CD4-positive, alpha-beta memory T cell (primary cell): ENCODE measurements at regions of chr11 and their contacts with region 1.

Region 1: DNA sequence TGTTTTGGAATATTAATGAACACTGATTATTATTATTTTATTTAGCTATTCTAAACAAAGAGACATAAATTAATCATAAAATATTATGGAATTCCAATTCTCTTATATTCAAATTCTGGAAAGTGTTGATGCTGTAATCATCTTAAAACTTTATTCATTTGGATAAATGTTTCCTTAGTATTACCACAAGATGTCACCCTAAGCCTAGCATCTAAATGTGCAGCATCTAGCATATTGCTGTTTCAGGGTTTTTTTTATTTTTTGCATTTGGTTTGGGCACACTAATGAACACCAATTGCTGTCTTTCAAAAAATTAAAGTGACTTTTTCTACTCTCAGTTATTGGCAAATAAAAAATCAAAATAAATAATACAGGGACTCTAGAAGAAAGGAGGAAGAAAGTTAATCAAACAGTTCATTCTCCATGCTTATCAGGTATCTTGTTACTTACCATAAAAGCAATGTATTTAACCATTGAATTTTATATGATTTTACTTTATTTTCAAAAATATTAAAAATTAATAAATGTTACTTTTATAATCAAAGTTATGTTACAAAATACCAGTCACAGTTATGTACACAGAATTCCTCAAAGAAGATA is 31.8 kb downstream of the DLG2 start:
- DNase-seq: peak in 4 of 5 donors; percentile 41 to 63 (median 54)
- H3K4me3 ChIP-seq: no peak overlapping the region
- H3K4me3 Mint-ChIP-seq: no peak overlapping the region
- H3K27ac ChIP-seq: no peak overlapping the region
- H3K27ac Mint-ChIP-seq: no peak overlapping the region
- H3K4me1 ChIP-seq: no peaks in the 10 kb centered on the region
- H3K4me1 Mint-ChIP-seq: no peaks in the 10 kb centered on the region
- H3K27me3 ChIP-seq: no peaks in the 10 kb centered on the region
- H3K27me3 Mint-ChIP-seq: peaks cover 0 to 3% of the 10 kb centered on the region in 2 donors

Region 2: DNA sequence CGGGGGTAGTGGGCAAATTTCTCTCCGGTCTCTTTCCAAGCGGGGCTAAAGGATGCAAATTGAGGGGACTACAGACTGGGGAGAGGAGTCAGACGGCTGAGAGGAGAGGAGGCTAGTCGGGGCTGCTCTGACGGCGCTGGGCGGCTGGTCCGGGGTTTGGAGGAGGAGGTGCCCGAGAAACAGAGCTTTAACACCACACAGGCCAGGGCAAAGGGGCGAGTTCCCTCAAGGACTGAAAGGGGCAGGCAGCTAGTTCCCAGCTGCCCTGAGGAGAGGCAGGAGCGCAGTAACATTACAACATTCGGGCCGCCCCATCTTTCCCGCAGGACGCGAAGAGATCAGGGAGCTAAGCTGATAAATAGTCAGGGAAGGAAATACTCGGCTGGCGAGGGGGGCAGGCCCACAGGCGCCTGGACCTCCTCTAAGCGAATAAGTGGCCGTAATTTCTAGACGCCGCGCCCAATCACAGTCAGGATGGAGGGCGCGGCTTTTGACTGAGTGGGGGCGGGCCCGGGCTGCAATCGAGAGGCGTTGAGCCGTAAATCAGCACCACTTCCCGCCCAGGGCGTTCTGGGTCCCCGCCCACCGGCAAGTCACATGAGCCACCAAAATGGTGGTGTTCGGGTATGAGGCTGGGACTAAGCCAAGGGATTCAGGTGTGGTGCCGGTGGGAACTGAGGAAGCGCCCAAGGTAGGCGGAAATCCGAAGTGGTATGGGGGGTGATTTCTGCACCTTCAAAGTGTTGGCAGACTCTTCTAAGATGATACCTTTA is 32.8 kb after region 1 on chr11 and contains the start of gene TMEM126B:
- CTCF ChIA-PET with region 1: no interaction called
- POLR2A ChIA-PET with region 1: no interaction called
- intact Hi-C with region 1: loop called (anchors 1 kb)
- DNase-seq: peak; percentile 92 to 97 (median 94)
- H3K4me3 ChIP-seq: peak within 1 kb of the TSS; percentile 58 to 73
- H3K4me3 Mint-ChIP-seq: peak within 1 kb of the TSS; percentile 93 to 99 (median 98)
- H3K27ac ChIP-seq: peak within 1 kb of the TSS; percentile 82
- H3K27ac Mint-ChIP-seq: peak within 1 kb of the TSS; percentile 91 to 99 (median 97)
- H3K4me1 ChIP-seq: peaks cover 30% of the 10 kb centered on the region
- H3K4me1 Mint-ChIP-seq: peaks cover 27 to 47% (median 36%) of the 10 kb centered on the region in 4 donors
- H3K27me3 ChIP-seq: no peaks in the 10 kb centered on the region
- H3K27me3 Mint-ChIP-seq: peaks cover 0 to 2% of the 10 kb centered on the region in 2 donors
- total RNA-seq, gene TMEM126B: 40.9 to 46.8 TPM

Region 3: GRCh38 chr11:85826116-85826855 is 230.9 kb after region 1 on chr11:
- CTCF ChIA-PET with region 1: interaction called, 3 read pairs
- POLR2A ChIA-PET with region 1: no interaction called
- intact Hi-C with region 1: loop called (anchors 1 kb)
- DNase-seq: peak in 2 of 5 donors; percentile 18 to 29
- H3K4me3 ChIP-seq: no peak overlapping the region
- H3K4me3 Mint-ChIP-seq: peak overlapping the region in 7 of 8 donors; percentile 4 to 76 (median 18)
- H3K27ac ChIP-seq: peak overlapping the region; percentile 6
- H3K27ac Mint-ChIP-seq: peak overlapping the region; percentile 82 to 99 (median 97)
- H3K4me1 ChIP-seq: peaks cover 74% of the 10 kb centered on the region
- H3K4me1 Mint-ChIP-seq: peaks cover 58 to 77% (median 63%) of the 10 kb centered on the region in 4 donors
- H3K27me3 ChIP-seq: no peaks in the 10 kb centered on the region
- H3K27me3 Mint-ChIP-seq: no peaks in the 10 kb centered on the region

Region 4: GRCh38 chr11:86041975-86042378 is 446.6 kb after region 1 on chr11:
- CTCF ChIA-PET with region 1: no interaction called
- POLR2A ChIA-PET with region 1: no interaction called
- intact Hi-C with region 1: loop called (anchors 1 kb)
- DNase-seq: peak; percentile 72 to 76 (median 74)
- H3K4me3 ChIP-seq: no peak overlapping the region
- H3K4me3 Mint-ChIP-seq: peak overlapping the region in 4 of 8 donors; percentile 0 to 35 (median 4)
- H3K27ac ChIP-seq: no peak overlapping the region
- H3K27ac Mint-ChIP-seq: peak overlapping the region; percentile 20 to 84 (median 64)
- H3K4me1 ChIP-seq: peaks cover 58% of the 10 kb centered on the region
- H3K4me1 Mint-ChIP-seq: peaks cover 49 to 73% (median 62%) of the 10 kb centered on the region in 4 donors
- H3K27me3 ChIP-seq: no peaks in the 10 kb centered on the region
- H3K27me3 Mint-ChIP-seq: no peaks in the 10 kb centered on the region

Region 5: GRCh38 chr11:86291466-86292262 is 696.3 kb after region 1 on chr11:
- CTCF ChIA-PET with region 1: interaction called, 3 read pairs
- POLR2A ChIA-PET with region 1: no interaction called
- intact Hi-C with region 1: loop called (anchors 1 kb)
- DNase-seq: peak; percentile 49 to 62 (median 55)
- H3K4me3 ChIP-seq: no peak overlapping the region
- H3K4me3 Mint-ChIP-seq: no peak overlapping the region
- H3K27ac ChIP-seq: no peak overlapping the region
- H3K27ac Mint-ChIP-seq: peak overlapping the region in 6 of 7 donors; percentile 1 to 78 (median 50)
- H3K4me1 ChIP-seq: peaks cover 60% of the 10 kb centered on the region
- H3K4me1 Mint-ChIP-seq: peaks cover 22 to 50% (median 34%) of the 10 kb centered on the region in 4 donors
- H3K27me3 ChIP-seq: no peaks in the 10 kb centered on the region
- H3K27me3 Mint-ChIP-seq: no peaks in the 10 kb centered on the region